ENCODE measurements at regions of chr12 and their contacts with region 1.

Region 1: GRCh38 chr12:54404061-54405004 is 14.7 kb downstream of the ITGA5 start:
- DNase-seq: no peak
- H3K4me3 ChIP-seq: no peak overlapping the region
- H3K27ac ChIP-seq: no peak overlapping the region
- H3K27me3 ChIP-seq: no peaks in the 10 kb centered on the region
- CTCF ChIP-seq: peak; percentile 92

Region 2: GRCh38 chr12:54159140-54159539 is 245.2 kb before region 1 on chr12:
- CTCF ChIA-PET with region 1: no interaction called
- POLR2A ChIA-PET with region 1: no interaction called
- DNase-seq: no peak
- H3K4me3 ChIP-seq: no peak overlapping the region
- H3K27ac ChIP-seq: no peak overlapping the region
- H3K27me3 ChIP-seq: peaks cover 51% of the 10 kb centered on the region
- CTCF ChIP-seq: no peak

Region 3: DNA sequence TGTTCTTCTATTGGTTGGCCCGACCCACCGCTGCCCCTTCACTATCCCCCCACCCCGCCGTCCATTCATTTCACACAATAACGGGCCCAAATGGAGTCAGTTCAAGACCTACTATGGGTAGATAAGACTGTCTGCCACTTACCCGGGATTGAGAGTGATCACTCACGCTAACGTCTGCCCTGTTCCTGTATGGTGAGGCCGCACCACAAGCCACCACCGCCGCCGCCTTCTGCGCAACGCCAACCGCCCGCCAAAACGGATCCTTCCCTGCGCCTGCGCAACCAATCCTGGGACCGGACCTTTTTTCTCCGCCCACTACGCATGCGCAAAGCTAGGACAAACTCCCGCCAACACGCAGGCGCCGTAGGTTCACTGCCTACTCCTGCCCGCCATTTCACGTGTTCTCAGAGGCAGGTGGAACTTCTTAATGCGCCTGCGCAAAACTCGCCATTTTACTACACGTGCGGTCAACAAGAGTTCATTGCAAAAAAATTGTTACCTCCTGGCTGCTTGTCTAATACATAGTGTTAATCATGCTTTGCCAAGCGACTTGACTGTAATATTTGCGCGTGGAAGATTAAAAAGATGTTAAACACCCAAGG is 124.4 kb before region 1 on chr12 and contains the start of gene CBX5:
- CTCF ChIA-PET with region 1: no interaction called
- POLR2A ChIA-PET with region 1: no interaction called
- DNase-seq: peak; percentile 99
- H3K4me3 ChIP-seq: peak within 1 kb of the TSS; percentile 93
- H3K27ac ChIP-seq: peak within 1 kb of the TSS; percentile 87
- H3K27me3 ChIP-seq: no peaks in the 10 kb centered on the region
- CTCF ChIP-seq: no peak
- polyA plus RNA-seq, gene CBX5: 49.0 and 62.3 TPM in 2 replicates

Region 4: DNA sequence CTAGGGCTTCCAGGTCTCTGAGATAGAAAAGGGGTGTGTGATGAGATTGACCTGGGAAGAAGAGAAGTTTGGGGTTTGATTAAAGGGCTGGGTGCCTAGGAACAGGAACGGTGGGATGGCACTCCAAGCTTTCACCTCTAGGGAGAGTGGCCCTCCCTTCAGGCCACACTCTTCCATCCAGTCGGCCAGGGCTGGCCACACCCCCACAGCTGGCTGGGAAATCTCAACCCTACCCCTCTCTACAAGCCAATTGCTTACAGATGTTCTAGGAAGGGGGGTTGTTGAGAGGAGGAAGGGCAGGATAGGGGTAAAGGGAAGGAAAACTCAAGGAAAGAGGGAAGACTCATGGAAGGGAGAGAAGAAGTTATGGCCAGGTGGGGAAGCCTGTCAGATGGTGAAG is 21.4 kb after region 1 on chr12:
- CTCF ChIA-PET with region 1: interaction called, 47 read pairs
- POLR2A ChIA-PET with region 1: no interaction called
- DNase-seq: no peak
- H3K4me3 ChIP-seq: no peak overlapping the region
- H3K27ac ChIP-seq: no peak overlapping the region
- H3K27me3 ChIP-seq: no peaks in the 10 kb centered on the region
- CTCF ChIP-seq: no peak

Region 5: DNA sequence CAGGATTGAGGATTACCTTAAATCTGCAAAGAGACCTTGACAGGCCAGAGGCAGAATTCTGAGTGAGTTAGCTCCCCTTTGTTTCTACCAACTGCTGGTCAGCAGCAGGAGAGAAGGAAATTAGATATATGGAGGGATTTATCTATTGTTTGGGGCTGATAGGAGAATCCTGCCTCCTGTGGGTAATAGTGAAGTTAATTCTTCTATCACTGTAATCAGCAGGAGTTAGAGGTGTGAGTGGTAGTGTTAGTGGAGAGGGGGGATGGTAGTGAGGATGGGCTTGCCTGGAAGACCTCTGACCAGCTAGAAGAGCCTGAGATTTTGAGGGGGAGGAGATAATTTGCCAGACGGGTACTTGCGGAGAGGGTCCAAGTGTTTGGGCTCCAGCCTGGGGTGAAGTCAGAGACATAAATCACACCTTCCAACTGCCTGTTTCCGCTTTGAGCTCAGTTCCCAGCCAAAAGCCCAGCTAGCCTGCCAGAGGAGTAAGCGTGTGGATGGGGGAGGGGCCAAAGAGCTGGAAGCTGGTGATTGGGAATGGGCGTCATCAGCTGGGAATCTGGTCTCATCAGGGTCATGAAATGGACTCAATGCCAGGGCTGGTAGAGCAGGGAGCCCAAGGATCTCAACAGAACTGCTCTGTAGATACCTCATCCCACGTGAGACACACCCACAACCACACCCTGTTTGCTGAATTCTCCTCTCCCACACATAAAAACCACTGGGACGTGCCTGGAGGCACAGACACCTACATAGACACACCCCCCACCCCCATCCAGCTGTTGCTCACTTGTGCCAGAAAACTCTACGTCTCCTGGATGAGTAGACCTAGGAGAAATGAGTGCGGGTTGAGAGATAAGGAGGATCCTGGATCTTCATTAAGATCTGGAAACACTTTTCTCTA is 27.8 kb after region 1 on chr12:
- CTCF ChIA-PET with region 1: interaction called, 415 read pairs
- POLR2A ChIA-PET with region 1: no interaction called
- DNase-seq: peak; percentile 16
- H3K4me3 ChIP-seq: no peak overlapping the region
- H3K27ac ChIP-seq: no peak overlapping the region
- H3K27me3 ChIP-seq: no peaks in the 10 kb centered on the region
- CTCF ChIP-seq: no peak

Region 6: DNA sequence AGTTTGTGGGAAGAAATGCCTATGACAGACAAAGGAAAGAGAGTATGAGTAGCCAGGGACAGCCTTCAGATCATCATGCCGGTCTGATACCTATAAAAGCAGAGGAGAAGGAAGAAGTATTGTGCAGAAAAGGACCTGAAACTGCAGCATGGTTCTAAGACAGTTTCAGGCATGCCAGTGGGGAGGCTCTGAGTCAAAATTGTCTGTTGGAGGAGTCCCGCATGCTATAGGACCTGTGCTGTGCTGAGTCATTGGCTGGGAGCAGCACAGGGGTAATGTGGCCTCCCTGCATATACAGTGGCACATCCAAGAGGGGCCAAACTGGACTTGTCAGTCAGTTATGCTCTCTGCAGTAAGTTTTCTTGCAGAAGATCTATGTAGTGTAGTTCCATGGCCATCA is 656.1 kb after region 1 on chr12:
- CTCF ChIA-PET with region 1: no interaction called
- POLR2A ChIA-PET with region 1: no interaction called
- DNase-seq: no peak
- H3K4me3 ChIP-seq: no peak overlapping the region
- H3K27ac ChIP-seq: no peak overlapping the region
- H3K27me3 ChIP-seq: no peaks in the 10 kb centered on the region
- CTCF ChIP-seq: no peak

Measured in AG04450 (cell line).